PC-9 (cell line): ENCODE measurements at regions of chr19 and their contacts with region 1.

Region 1: GRCh38 chr19:17938092-17938845 is 5.5 kb downstream of the CCDC124 start:
- DNase-seq: peak; percentile 75
- H3K4me3 ChIP-seq: no peak overlapping the region
- H3K27ac ChIP-seq: no peak overlapping the region
- H3K4me1 ChIP-seq: peaks cover 12% of the 10 kb centered on the region
- H3K27me3 ChIP-seq: no peaks in the 10 kb centered on the region
- CTCF ChIP-seq: peak; percentile 97

Region 2: GRCh38 chr19:17824339-17824738 is 113.9 kb before region 1 on chr19:
- CTCF ChIA-PET with region 1: no interaction called
- POLR2A ChIA-PET with region 1: no interaction called
- intact Hi-C with region 1: no loop called
- DNase-seq: no peak
- H3K4me3 ChIP-seq: no peak overlapping the region
- H3K27ac ChIP-seq: no peak overlapping the region
- H3K4me1 ChIP-seq: peaks cover 2% of the 10 kb centered on the region
- H3K27me3 ChIP-seq: no peaks in the 10 kb centered on the region
- CTCF ChIP-seq: no peak

Region 3: DNA sequence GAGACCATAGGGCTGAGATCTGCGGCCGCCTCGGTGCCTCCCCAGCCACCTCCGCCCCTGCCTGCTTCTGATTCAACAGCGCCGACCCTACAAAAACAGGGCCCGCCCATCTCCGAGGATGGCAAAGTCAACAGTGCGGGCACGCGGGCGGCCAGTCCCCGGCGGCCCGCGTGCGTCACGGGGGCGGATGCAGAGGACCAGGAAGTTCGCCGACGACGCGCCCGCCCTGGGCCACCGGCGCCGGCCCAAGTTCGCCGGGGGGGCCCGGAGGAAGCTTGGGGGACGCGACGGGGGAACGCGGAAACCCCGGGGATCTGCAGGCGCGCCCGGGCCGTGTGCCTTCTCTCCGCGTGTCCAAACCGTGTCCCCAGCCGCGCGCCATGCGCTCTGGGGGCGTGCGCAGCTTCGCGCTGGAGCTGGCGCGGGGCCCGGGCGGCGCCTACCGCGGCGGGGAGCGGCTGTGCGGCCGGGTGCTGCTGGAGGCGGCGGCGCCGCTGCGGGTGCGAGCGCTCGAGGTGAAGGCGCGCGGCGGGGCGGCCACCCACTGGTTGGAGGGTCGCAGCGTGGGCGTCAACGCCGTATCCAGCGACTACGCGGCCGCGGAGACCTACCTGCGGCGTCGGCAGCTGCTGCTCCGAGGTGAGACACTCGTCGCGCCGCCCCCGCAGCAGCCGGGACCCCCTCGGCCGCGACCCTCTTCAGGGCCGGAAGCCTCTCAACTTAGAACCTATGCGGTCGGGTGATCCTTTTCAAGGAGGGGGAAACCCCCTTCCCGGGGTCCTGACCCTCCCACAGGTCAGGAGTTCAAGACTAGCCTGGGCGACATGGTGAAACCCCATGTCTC is 62.9 kb after region 1 on chr19:
- CTCF ChIA-PET with region 1: interaction called, 6 read pairs
- POLR2A ChIA-PET with region 1: interaction called, 5 read pairs
- intact Hi-C with region 1: loop called (anchors 1 kb)
- DNase-seq: peak; percentile 85 to 88
- H3K4me3 ChIP-seq: peak overlapping the region; percentile 99
- H3K27ac ChIP-seq: peak overlapping the region; percentile 75
- H3K4me1 ChIP-seq: peaks cover 38% of the 10 kb centered on the region
- H3K27me3 ChIP-seq: no peaks in the 10 kb centered on the region
- CTCF ChIP-seq: no peak

Region 4: GRCh38 chr19:18058208-18059030 is 120.2 kb after region 1 on chr19:
- CTCF ChIA-PET with region 1: no interaction called
- POLR2A ChIA-PET with region 1: no interaction called
- intact Hi-C with region 1: loop called (anchors 1 kb)
- DNase-seq: peak; percentile 55 to 77
- H3K4me3 ChIP-seq: no peak overlapping the region
- H3K27ac ChIP-seq: no peak overlapping the region
- H3K4me1 ChIP-seq: no peaks in the 10 kb centered on the region; the same call in 1 of the 2 replicates
- H3K27me3 ChIP-seq: no peaks in the 10 kb centered on the region
- CTCF ChIP-seq: peak; percentile 99

Region 5: GRCh38 chr19:18152444-18152816 is 214.2 kb after region 1 on chr19:
- CTCF ChIA-PET with region 1: no interaction called
- POLR2A ChIA-PET with region 1: no interaction called
- intact Hi-C with region 1: loop called (anchors 5 kb)
- DNase-seq: peak; percentile 92 to 93
- H3K4me3 ChIP-seq: peak overlapping the region; percentile 73
- H3K27ac ChIP-seq: peak overlapping the region; percentile 91
- H3K4me1 ChIP-seq: peaks cover 15% of the 10 kb centered on the region
- H3K27me3 ChIP-seq: no peaks in the 10 kb centered on the region
- CTCF ChIP-seq: peak; percentile 82